AG04449 (cell line): ENCODE measurements at regions of chr6 and their contacts with region 1.

Region 1: DNA sequence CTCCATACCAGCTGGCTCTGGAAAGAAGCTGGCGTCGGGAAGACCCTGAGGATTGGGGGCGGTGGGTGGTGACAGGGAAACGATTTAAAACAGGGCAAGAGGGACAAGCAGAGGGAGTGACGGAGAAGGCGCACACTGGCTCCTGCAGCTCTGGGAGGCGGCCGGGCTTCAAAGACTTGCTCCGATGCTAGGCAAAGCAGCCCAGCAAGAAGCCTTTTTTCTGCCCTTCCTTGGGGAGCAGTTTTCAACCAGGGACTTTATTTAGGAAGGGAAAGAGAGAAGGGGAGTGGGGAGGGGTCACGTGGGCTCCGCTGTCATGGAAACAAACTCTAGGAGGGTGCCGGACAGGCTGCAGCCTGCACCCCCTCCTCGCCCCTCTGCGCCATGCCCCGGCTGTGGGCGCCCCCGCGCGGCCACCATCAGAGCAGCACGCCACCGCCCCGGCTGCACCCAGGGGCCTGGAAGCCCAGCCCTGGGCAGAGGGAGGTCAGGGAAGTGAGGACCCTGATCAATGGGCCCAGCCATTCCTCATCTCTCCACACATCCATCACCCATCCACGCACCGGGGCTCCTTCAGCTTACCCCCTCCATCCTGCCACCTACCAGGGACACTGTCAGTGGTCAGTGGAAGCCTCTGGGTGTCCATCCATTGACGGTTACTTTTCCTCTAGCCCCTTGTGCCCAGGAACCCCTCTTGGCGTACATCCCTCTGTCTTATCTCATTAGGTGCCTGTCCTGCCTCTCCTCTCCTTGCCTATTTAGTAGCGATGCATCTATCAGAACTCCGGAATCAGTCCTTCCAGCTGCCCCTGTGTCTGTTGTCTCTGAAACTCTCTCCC is 66.6 kb upstream of the CCDC167 start:
- DNase-seq: no peak
- H3K4me3 ChIP-seq: peak overlapping the region; percentile 54
- CTCF ChIP-seq: peak; percentile 98

Region 2: DNA sequence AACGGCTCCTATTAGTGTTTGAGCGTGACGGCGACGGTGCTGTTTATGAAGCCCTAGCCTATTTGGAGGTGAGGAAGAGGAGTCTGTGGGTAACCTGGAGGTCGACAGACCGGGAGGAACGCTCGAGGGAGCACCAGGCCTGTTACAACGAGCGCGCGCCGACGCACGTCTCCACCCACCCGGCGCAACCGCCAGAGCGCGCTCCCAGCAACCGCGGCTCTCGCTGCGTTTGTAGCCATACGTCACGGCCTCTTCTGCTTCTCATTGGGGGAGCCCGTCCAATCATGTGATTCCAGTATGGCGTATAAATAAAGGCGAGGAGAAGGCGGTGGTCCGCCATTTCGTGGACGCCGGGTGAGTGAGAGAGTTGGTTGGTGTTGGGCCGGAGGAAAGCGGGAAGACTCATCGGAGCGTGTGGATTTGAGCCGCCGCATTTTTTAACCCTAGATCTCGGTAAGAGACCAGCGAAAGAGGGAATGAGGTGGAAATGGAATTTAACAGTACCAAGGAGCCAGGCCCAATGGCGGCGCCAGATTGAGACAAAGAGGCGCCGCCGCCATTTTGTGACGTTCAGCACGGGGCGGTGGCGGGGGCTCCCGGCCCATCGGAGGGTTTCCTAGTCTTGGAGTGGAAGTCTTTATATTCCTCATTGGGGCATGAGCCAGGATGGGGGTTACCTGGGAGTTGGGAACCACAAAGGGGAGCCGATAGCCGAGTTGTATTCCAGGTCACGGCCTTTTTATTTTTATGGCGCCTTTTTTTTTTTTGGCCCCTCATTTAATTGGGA is 972.1 kb before region 1 on chr6 and contains the start of gene SRSF3:
- CTCF ChIA-PET with region 1: no interaction called
- POLR2A ChIA-PET with region 1: no interaction called
- DNase-seq: peak; percentile 84
- H3K4me3 ChIP-seq: peak within 1 kb of the TSS; percentile 70
- CTCF ChIP-seq: peak; percentile 63

Region 3: GRCh38 chr6:37365762-37366161 is 200.6 kb before region 1 on chr6:
- CTCF ChIA-PET with region 1: interaction called, 20 read pairs
- POLR2A ChIA-PET with region 1: no interaction called
- DNase-seq: no peak
- H3K4me3 ChIP-seq: no peak overlapping the region
- CTCF ChIP-seq: peak; percentile 8

Region 4: GRCh38 chr6:37483917-37484785 is 82.2 kb before region 1 on chr6:
- CTCF ChIA-PET with region 1: interaction called, 103 read pairs
- POLR2A ChIA-PET with region 1: no interaction called
- DNase-seq: no peak
- H3K4me3 ChIP-seq: no peak overlapping the region
- CTCF ChIP-seq: peak; percentile 98

Region 5: DNA sequence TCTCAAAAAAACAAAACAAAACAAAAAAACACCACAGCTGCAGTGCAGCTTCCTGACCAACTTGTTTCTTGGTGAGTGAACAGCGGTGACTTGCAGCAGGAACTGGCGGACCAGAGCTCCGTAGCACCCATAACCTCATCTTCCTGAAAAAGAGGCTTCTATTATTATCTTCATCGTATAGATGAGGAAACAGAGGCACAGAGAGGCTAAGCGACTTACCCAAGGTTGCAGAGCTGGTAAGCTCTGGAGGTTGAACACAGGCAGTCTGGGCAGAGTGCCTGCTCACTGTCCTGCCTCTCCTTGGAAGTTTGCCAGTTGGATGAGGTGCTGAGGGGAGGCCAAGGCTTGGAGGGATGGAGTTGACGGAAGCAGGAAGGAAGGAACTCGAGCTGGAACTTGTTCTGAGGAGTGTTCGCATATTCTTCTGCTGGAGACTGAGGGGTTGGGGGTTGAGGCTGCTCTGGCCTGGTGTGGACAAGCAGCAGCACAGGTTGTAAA is 18.7 kb before region 1 on chr6:
- CTCF ChIA-PET with region 1: interaction called, 15 read pairs
- POLR2A ChIA-PET with region 1: no interaction called
- DNase-seq: no peak
- H3K4me3 ChIP-seq: no peak overlapping the region
- CTCF ChIP-seq: no peak

Region 6: DNA sequence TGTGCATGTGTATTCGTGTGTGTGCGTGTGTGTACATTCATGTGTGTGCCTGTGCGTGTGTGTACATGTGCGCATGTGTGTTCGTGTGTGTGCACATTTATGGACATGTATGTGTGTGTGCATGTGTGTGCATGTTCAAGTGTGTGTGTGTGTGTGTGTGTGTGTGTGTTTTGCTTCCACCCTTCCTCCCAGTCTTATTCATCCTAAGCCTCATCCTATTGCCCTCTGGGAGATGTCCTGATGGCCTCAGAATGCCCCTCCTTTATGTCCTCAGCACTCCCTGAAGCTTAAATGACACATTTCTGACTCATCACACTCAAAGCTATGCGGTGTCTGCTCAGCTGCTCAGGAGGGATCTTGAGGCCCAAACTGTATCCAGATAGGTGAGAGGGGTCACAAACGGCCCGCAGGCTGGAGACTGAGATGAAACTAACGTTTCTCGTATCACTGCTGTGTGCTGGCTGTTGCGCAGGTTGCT is 10.0 kb after region 1 on chr6:
- CTCF ChIA-PET with region 1: interaction called, 40 read pairs
- POLR2A ChIA-PET with region 1: no interaction called
- DNase-seq: no peak
- H3K4me3 ChIP-seq: no peak overlapping the region
- CTCF ChIP-seq: no peak

Region 7: GRCh38 chr6:37691904-37692806 is 125.8 kb after region 1 on chr6:
- CTCF ChIA-PET with region 1: interaction called, 36 read pairs
- POLR2A ChIA-PET with region 1: no interaction called
- DNase-seq: no peak
- H3K4me3 ChIP-seq: no peak overlapping the region
- CTCF ChIP-seq: peak; percentile 99